ENCODE measurements at regions of chr10 and their contacts with region 1.

Region 1: DNA sequence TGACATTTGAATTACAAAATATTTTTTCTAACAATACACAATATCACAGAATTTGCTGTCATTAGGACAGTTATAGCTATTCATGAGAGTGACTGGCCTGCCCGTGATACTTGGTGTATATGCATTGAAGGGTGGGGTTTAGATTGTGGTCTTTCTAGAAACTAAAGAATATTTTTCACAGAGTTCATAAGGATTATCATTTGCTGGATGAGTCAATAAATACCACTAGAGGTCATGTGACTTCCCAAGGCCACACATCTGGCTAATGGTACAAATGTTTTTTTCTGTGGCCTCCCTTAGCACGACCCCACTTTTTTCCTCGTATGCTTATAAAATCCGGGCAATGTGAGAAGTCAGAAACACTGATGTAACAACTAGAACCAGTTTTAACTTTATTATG is 5.2 kb downstream of the OPTN start:
- DNase-seq: no peak
- H3K4me3 Mint-ChIP-seq: no peak overlapping the region
- H3K27ac Mint-ChIP-seq: peak overlapping the region; percentile 50
- H3K4me1 Mint-ChIP-seq: peaks cover 63% of the 10 kb centered on the region
- H3K27me3 Mint-ChIP-seq: no peaks in the 10 kb centered on the region

Region 2: GRCh38 chr10:13074561-13075451 is 30.4 kb before region 1 on chr10:
- CTCF ChIA-PET with region 1: no interaction called
- intact Hi-C with region 1: no loop called
- DNase-seq: peak; percentile 79
- H3K4me3 Mint-ChIP-seq: no peak overlapping the region
- H3K27ac Mint-ChIP-seq: no peak overlapping the region
- H3K4me1 Mint-ChIP-seq: no peaks in the 10 kb centered on the region
- H3K27me3 Mint-ChIP-seq: peaks cover 20% of the 10 kb centered on the region

Region 3: GRCh38 chr10:13087986-13088618 is 17.1 kb before region 1 on chr10:
- CTCF ChIA-PET with region 1: no interaction called
- intact Hi-C with region 1: no loop called
- DNase-seq: no peak
- H3K4me3 Mint-ChIP-seq: no peak overlapping the region
- H3K27ac Mint-ChIP-seq: no peak overlapping the region
- H3K4me1 Mint-ChIP-seq: peaks cover 4% of the 10 kb centered on the region
- H3K27me3 Mint-ChIP-seq: peaks cover 4% of the 10 kb centered on the region

Region 4: GRCh38 chr10:13115832-13116803 is 10.9 kb after region 1 on chr10:
- CTCF ChIA-PET with region 1: interaction called, 9 read pairs
- intact Hi-C with region 1: loop called (anchors 1 kb)
- DNase-seq: no peak
- H3K4me3 Mint-ChIP-seq: peak overlapping the region; percentile 41
- H3K27ac Mint-ChIP-seq: peak overlapping the region; percentile 1
- H3K4me1 Mint-ChIP-seq: peaks cover 4% of the 10 kb centered on the region
- H3K27me3 Mint-ChIP-seq: no peaks in the 10 kb centered on the region

Region 5: DNA sequence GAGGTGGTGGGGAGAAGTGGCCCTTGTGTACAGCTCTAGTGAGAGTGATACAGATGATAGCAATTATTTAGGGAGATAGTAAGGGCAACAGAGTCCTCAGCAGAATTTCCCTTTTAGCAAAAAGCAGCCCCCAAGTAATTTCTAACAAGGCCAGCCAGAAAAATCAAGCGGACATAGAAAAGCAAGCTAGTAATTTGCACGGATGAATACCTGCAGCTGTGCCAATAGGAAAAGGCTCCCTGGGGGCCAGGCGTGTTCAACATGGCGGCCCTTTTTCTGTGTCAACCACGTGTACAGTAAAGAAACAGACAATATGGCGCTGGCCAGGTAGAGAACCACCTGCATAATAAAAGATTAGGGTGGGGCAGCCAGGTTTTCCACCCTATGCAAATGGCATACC is 63.6 kb after region 1 on chr10:
- CTCF ChIA-PET with region 1: no interaction called
- intact Hi-C with region 1: no loop called
- DNase-seq: no peak
- H3K4me3 Mint-ChIP-seq: no peak overlapping the region
- H3K27ac Mint-ChIP-seq: no peak overlapping the region
- H3K4me1 Mint-ChIP-seq: peaks cover 5% of the 10 kb centered on the region
- H3K27me3 Mint-ChIP-seq: no peaks in the 10 kb centered on the region

Region 6: GRCh38 chr10:13348216-13349017 is 243.2 kb after region 1 on chr10 and contains the start of gene SEPHS1:
- CTCF ChIA-PET with region 1: interaction called, 3 read pairs
- intact Hi-C with region 1: loop called (anchors 2 kb)
- DNase-seq: peak; percentile 91
- H3K4me3 Mint-ChIP-seq: peak within 1 kb of the TSS; percentile 88
- H3K27ac Mint-ChIP-seq: peak within 1 kb of the TSS; percentile 94
- H3K4me1 Mint-ChIP-seq: peaks cover 57% of the 10 kb centered on the region
- H3K27me3 Mint-ChIP-seq: no peaks in the 10 kb centered on the region
- total RNA-seq, gene SEPHS1: 75.6 to 79.6 TPM